Adrenal gland (tissue), 19 donors: ENCODE measurements at regions of chr17 and their contacts with region 1.

Region 1: DNA sequence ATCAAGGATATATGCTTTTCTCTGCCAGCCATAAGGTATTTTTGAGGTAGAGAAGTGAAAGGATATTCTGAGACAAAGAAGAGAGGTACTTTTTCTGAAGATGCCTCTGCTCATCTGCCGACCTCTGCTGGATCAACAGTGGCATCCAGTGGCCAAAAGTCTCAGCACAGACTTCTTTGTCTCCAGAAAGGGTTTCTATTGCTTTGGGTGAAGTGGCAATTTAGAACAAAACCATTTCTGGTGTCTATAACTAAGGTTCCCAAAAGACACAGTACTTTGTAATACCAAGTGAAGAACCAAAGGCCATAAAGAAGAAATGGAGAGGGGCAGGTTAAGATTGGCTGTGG is 155.2 kb upstream of the C17orf78 start:
- DNase-seq: peak in 4 of 7 donors; percentile 14 to 61 (median 28)
- H3K4me3 ChIP-seq: no peak overlapping the region
- H3K27ac ChIP-seq: no peak overlapping the region
- H3K4me1 ChIP-seq: no peaks in the 10 kb centered on the region
- H3K27me3 ChIP-seq: no peaks in the 10 kb centered on the region
- CTCF ChIP-seq: peak in 3 of 6 experiments; percentile 18 to 37 (median 33)
- POLR2A ChIP-seq: no peak

Region 2: GRCh38 chr17:37130984-37131446 is 89.6 kb before region 1 on chr17:
- intact Hi-C with region 1: loop called in 1 of 2 experiments (anchors 10 kb)
- DNase-seq: no peak
- H3K4me3 ChIP-seq: no peak overlapping the region
- H3K27ac ChIP-seq: no peak overlapping the region
- H3K4me1 ChIP-seq: peaks cover 0 to 3% of the 10 kb centered on the region in 2 donors
- H3K27me3 ChIP-seq: no peaks in the 10 kb centered on the region
- CTCF ChIP-seq: no peak
- POLR2A ChIP-seq: no peak

Region 3: GRCh38 chr17:37388266-37388665 is 167.7 kb after region 1 on chr17:
- intact Hi-C with region 1: no loop called
- DNase-seq: no peak
- H3K4me3 ChIP-seq: no peak overlapping the region
- H3K27ac ChIP-seq: no peak overlapping the region
- H3K4me1 ChIP-seq: no peaks in the 10 kb centered on the region
- H3K27me3 ChIP-seq: no peaks in the 10 kb centered on the region
- CTCF ChIP-seq: no peak
- POLR2A ChIP-seq: no peak